HCT116 (cell line): ENCODE measurements at regions of chr16 and their contacts with region 1.

Region 1: GRCh38 chr16:67521095-67521804 is 7.4 kb upstream of the RIPOR1 start:
- DNase-seq: peak; percentile 93
- ATAC-seq: peak; percentile 91
- H3K4me3 ChIP-seq: peak overlapping the region; percentile 32 to 60
- H3K27ac ChIP-seq: peak overlapping the region; percentile 64
- H3K4me1 ChIP-seq: peaks cover 0 to 29% of the 10 kb centered on the region in 2 experiments; a peak in 2 of 4 replicates
- H3K27me3 ChIP-seq: no peaks in the 10 kb centered on the region
- CTCF ChIP-seq: peak; percentile 84 to 99 (median 99)
- POLR2A ChIP-seq: no peak
- RAD21 ChIP-seq: peak; percentile 95

Region 2: GRCh38 chr16:67339453-67339852 is 181.8 kb before region 1 on chr16:
- CTCF ChIA-PET with region 1: no interaction called
- POLR2A ChIA-PET with region 1: no interaction called
- RAD21 ChIA-PET with region 1: no interaction called
- intact Hi-C with region 1: no loop called
- DNase-seq: peak; percentile 18
- ATAC-seq: peak; percentile 55; the same call in 1 of the 2 replicates
- H3K4me3 ChIP-seq: no peak overlapping the region
- H3K27ac ChIP-seq: no peak overlapping the region
- H3K4me1 ChIP-seq: no peaks in the 10 kb centered on the region
- H3K27me3 ChIP-seq: no peaks in the 10 kb centered on the region
- CTCF ChIP-seq: peak in 2 of 3 experiments; percentile 34 to 76; a peak in 5 of 6 replicates
- POLR2A ChIP-seq: no peak
- RAD21 ChIP-seq: peak; percentile 83

Region 3: GRCh38 chr16:67389911-67390825 is 131.1 kb before region 1 on chr16:
- CTCF ChIA-PET with region 1: no interaction called
- POLR2A ChIA-PET with region 1: no interaction called
- RAD21 ChIA-PET with region 1: no interaction called
- intact Hi-C with region 1: no loop called
- DNase-seq: no peak
- ATAC-seq: no peak
- H3K4me3 ChIP-seq: no peak overlapping the region
- H3K27ac ChIP-seq: no peak overlapping the region
- H3K4me1 ChIP-seq: no peaks in the 10 kb centered on the region; a peak in 1 of 4 replicates
- H3K27me3 ChIP-seq: no peaks in the 10 kb centered on the region
- CTCF ChIP-seq: no peak
- POLR2A ChIP-seq: no peak
- RAD21 ChIP-seq: no peak

Region 4: GRCh38 chr16:67441271-67441753 is 79.9 kb before region 1 on chr16:
- CTCF ChIA-PET with region 1: no interaction called
- POLR2A ChIA-PET with region 1: no interaction called
- RAD21 ChIA-PET with region 1: no interaction called
- intact Hi-C with region 1: no loop called
- DNase-seq: no peak
- ATAC-seq: no peak
- H3K4me3 ChIP-seq: no peak overlapping the region
- H3K27ac ChIP-seq: no peak overlapping the region
- H3K4me1 ChIP-seq: no peaks in the 10 kb centered on the region
- H3K27me3 ChIP-seq: no peaks in the 10 kb centered on the region
- CTCF ChIP-seq: no peak
- POLR2A ChIP-seq: no peak
- RAD21 ChIP-seq: no peak

Region 5: DNA sequence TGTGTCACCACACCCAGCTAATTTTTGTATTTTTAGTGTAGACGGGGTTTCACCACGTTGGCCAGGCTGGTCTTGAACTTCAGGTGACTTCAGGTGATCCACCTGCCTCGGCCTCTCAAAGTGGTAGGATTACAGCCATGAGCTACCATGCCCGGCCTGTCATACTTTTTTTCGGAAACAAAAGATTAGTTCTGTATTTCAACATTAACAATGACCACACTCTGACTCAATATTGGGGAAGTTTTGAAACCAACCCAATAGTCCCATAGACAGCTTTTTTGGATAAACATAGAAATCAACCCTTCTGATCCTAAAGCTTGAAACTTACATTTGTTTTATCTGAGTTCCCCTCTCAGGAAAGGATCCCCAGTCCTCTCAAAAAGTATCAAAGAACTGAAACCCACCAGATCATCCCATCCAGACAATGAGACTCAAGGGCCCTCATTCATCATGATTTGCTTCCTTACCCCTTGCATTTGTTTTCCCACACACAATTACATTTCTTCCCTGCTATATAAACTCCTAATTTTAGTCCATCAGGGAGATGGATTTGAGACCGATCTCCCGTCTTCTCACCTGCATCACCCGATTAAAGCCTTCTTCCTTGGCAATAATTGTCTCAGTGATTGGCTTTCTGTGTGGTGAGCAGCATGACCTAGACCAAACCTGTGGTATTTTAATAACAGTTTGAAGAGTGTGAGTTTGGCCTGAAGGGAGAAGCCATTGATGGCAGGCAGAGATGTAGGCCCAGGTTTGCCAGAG is 30.7 kb before region 1 on chr16:
- CTCF ChIA-PET with region 1: interaction called, 40 read pairs
- POLR2A ChIA-PET with region 1: interaction called, 3 read pairs
- RAD21 ChIA-PET with region 1: interaction called in 1 of 2 experiments, 3 read pairs
- intact Hi-C with region 1: no loop called
- DNase-seq: no peak
- ATAC-seq: no peak
- H3K4me3 ChIP-seq: no peak overlapping the region
- H3K27ac ChIP-seq: no peak overlapping the region
- H3K4me1 ChIP-seq: no peaks in the 10 kb centered on the region
- H3K27me3 ChIP-seq: no peaks in the 10 kb centered on the region
- CTCF ChIP-seq: no peak
- POLR2A ChIP-seq: no peak
- RAD21 ChIP-seq: no peak

Region 6: GRCh38 chr16:67546761-67547422 is 25.6 kb after region 1 on chr16:
- CTCF ChIA-PET with region 1: interaction called, 12 read pairs
- POLR2A ChIA-PET with region 1: no interaction called
- RAD21 ChIA-PET with region 1: interaction called in 1 of 2 experiments, 4 read pairs
- intact Hi-C with region 1: no loop called
- DNase-seq: peak; percentile 34
- ATAC-seq: peak; percentile 74
- H3K4me3 ChIP-seq: no peak overlapping the region
- H3K27ac ChIP-seq: peak overlapping the region; percentile 25; the same call in 1 of the 2 replicates
- H3K4me1 ChIP-seq: peaks cover 0 to 13% of the 10 kb centered on the region in 2 experiments; a peak in 2 of 4 replicates
- H3K27me3 ChIP-seq: no peaks in the 10 kb centered on the region
- CTCF ChIP-seq: peak; percentile 89 to 95 (median 90)
- POLR2A ChIP-seq: no peak
- RAD21 ChIP-seq: peak; percentile 92

Region 7: DNA sequence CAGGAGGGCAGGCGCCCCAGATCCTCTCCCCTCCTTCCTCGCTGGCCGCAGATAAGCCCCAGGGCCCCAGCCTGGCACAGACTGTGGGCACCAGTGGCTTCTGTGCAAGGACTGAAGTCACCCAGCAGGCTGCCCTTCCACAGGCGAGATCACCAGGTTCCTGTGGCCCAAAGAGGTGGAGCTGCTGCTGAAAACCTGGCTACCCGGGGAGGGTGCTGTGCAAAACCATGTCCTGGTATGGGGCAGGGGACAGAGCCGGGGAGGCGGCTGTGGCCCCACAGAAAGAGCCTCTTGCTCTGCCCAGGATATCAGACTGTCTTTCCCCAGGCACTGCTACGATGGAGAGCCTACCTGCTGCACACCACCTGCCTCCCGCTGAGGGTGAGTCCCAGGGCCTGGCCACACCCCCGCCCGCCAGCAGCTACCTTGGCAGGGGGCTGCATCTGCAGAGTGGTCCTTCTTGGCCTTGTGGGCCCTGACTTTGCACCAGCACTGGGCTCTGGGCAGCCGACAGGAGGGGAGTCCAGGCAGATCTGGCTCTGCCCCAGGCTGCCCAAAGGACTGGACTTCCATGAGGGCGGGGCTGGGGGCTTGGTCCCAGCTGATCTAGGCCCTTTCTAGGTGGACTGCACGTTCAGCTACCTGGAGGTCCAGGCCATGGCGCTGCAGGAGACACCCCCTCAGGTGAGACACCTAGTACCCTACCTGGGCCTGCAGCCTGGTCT is 124.3 kb after region 1 on chr16:
- CTCF ChIA-PET with region 1: interaction called, 22 read pairs
- POLR2A ChIA-PET with region 1: no interaction called
- RAD21 ChIA-PET with region 1: interaction called in 1 of 2 experiments, 3 read pairs
- intact Hi-C with region 1: loop called (anchors 1 kb)
- DNase-seq: no peak
- ATAC-seq: no peak
- H3K4me3 ChIP-seq: no peak overlapping the region
- H3K27ac ChIP-seq: no peak overlapping the region
- H3K4me1 ChIP-seq: peaks cover 0 to 8% of the 10 kb centered on the region in 2 experiments; a peak in 1 of 4 replicates
- H3K27me3 ChIP-seq: no peaks in the 10 kb centered on the region
- CTCF ChIP-seq: no peak
- POLR2A ChIP-seq: no peak
- RAD21 ChIP-seq: no peak

Region 8: GRCh38 chr16:67667817-67668494 is 146.7 kb after region 1 on chr16:
- CTCF ChIA-PET with region 1: interaction called, 22 read pairs
- POLR2A ChIA-PET with region 1: no interaction called
- RAD21 ChIA-PET with region 1: no interaction called
- intact Hi-C with region 1: loop called (anchors 1 kb)
- DNase-seq: peak; percentile 77
- ATAC-seq: peak; percentile 83
- H3K4me3 ChIP-seq: no peak overlapping the region
- H3K27ac ChIP-seq: peak overlapping the region; percentile 50; the same call in 1 of the 2 replicates
- H3K4me1 ChIP-seq: peaks cover 6 to 41% of the 10 kb centered on the region in 2 experiments; a peak in 3 of 4 replicates
- H3K27me3 ChIP-seq: no peaks in the 10 kb centered on the region
- CTCF ChIP-seq: peak in 2 of 3 experiments; percentile 75 to 88; a peak in 4 of 6 replicates
- POLR2A ChIP-seq: no peak
- RAD21 ChIP-seq: no peak

Region 9: DNA sequence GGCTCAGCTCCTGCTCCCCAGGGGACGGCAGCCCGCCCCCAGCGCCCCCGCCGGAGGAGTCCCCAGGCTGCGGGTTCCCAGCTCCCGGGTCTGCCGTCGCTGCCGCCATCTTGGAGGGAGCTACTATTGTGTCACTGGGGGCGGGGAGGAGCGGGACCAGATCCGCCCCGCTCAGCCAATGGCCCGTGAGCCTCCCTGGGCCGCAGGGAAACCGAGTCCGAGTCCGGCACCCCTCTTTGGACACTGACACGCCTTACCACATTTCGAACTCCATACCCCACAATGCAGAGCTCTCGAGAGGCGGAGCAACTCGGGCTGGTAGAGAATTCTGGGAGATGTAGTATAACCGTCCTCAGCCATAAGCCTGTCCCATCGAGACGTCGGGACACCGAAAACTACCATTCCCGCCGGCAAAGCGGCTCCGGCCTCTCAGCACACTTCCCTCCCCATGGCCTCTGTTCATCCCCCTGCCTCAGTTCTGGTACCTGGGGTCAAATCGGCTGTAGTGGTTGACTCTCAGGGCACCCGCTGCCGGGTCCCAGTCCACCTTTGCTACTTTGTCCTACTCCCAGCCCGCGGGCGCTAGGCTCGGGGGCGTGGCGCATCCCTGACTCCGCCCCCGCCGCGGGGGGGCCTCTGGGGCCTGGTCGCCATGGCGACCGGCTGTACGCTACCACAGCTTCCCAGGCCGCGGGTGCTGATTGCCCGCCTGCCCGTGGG is 285.3 kb after region 1 on chr16 and contains the starts of genes RANBP10 and TSNAXIP1:
- CTCF ChIA-PET with region 1: no interaction called
- POLR2A ChIA-PET with region 1: no interaction called
- RAD21 ChIA-PET with region 1: no interaction called
- intact Hi-C with region 1: loop called (anchors 10 kb)
- DNase-seq: peak; percentile 98
- ATAC-seq: peak; percentile 95
- H3K4me3 ChIP-seq: peak within 1 kb of the TSS; percentile 98 to 100
- H3K27ac ChIP-seq: peak within 1 kb of the TSS; percentile 68
- H3K4me1 ChIP-seq: peaks cover 12 to 23% of the 10 kb centered on the region in 2 experiments
- H3K27me3 ChIP-seq: no peaks in the 10 kb centered on the region
- CTCF ChIP-seq: no peak
- POLR2A ChIP-seq: peak; percentile 78
- RAD21 ChIP-seq: no peak
- total RNA-seq, gene RANBP10: 16.9 TPM
- total RNA-seq, gene TSNAXIP1: 1.2 TPM

Region 10: GRCh38 chr16:67872786-67873537 is 351.7 kb after region 1 on chr16 and contains the start of gene EDC4:
- CTCF ChIA-PET with region 1: no interaction called
- POLR2A ChIA-PET with region 1: no interaction called
- RAD21 ChIA-PET with region 1: no interaction called
- intact Hi-C with region 1: no loop called
- DNase-seq: peak; percentile 52
- ATAC-seq: peak; percentile 90
- H3K4me3 ChIP-seq: peak within 1 kb of the TSS; percentile 82 to 97
- H3K27ac ChIP-seq: peak within 1 kb of the TSS; percentile 70
- H3K4me1 ChIP-seq: peaks cover 7 to 17% of the 10 kb centered on the region in 2 experiments
- H3K27me3 ChIP-seq: no peaks in the 10 kb centered on the region
- CTCF ChIP-seq: no peak
- POLR2A ChIP-seq: no peak
- RAD21 ChIP-seq: no peak
- total RNA-seq, gene EDC4: 100 TPM

Region 11: GRCh38 chr16:68237243-68238028 is 716.2 kb after region 1 on chr16:
- CTCF ChIA-PET with region 1: no interaction called
- POLR2A ChIA-PET with region 1: no interaction called
- RAD21 ChIA-PET with region 1: no interaction called
- intact Hi-C with region 1: loop called (anchors 10 kb)
- DNase-seq: peak; percentile 96
- ATAC-seq: peak; percentile 77
- H3K4me3 ChIP-seq: peak overlapping the region; percentile 56 to 88
- H3K27ac ChIP-seq: peak overlapping the region; percentile 86
- H3K4me1 ChIP-seq: peaks cover 29 to 47% of the 10 kb centered on the region in 2 experiments
- H3K27me3 ChIP-seq: no peaks in the 10 kb centered on the region
- CTCF ChIP-seq: no peak
- POLR2A ChIP-seq: peak; percentile 94
- RAD21 ChIP-seq: no peak